Activated CD4-positive, alpha-beta memory T cell treated with anti-CD3 and anti-CD28 coated beads for 36 hours (primary cell): ENCODE measurements at regions of chr9 and their contacts with region 1.

Region 1: GRCh38 chr9:109119439-109120203 is at the start of gene TMEM245:
- DNase-seq: peak; percentile 97
- H3K4me3 Mint-ChIP-seq: peak within 1 kb of the TSS; percentile 88
- H3K27ac Mint-ChIP-seq: peak within 1 kb of the TSS; percentile 86
- H3K4me1 Mint-ChIP-seq: peaks cover 38% of the 10 kb centered on the region
- H3K27me3 Mint-ChIP-seq: no peaks in the 10 kb centered on the region
- total RNA-seq, gene TMEM245: 23.0 TPM

Region 2: DNA sequence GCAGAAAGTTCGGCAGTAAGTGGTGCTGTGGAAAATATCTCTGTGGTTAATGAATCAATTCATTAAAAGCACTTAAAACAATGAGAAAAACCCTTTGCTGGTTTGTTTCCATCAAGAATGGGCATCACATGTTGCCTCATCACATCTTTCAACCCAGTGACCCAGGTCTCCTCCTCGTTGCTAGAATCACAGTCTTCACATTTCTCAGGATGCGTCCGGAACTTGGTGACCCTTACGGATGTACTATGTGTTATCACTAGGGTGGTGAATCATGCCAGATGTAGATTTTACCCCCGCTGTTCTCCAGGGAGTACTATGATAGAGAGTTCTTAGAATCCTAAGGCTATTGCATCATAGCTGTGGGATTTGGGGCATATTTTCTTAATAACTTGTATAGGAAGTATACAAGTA is 1412.2 kb before region 1 on chr9:
- CTCF ChIA-PET with region 1: no interaction called
- POLR2A ChIA-PET with region 1: no interaction called
- intact Hi-C with region 1: no loop called
- DNase-seq: no peak
- H3K4me3 Mint-ChIP-seq: no peak overlapping the region
- H3K27ac Mint-ChIP-seq: no peak overlapping the region
- H3K4me1 Mint-ChIP-seq: no peaks in the 10 kb centered on the region
- H3K27me3 Mint-ChIP-seq: no peaks in the 10 kb centered on the region

Region 3: DNA sequence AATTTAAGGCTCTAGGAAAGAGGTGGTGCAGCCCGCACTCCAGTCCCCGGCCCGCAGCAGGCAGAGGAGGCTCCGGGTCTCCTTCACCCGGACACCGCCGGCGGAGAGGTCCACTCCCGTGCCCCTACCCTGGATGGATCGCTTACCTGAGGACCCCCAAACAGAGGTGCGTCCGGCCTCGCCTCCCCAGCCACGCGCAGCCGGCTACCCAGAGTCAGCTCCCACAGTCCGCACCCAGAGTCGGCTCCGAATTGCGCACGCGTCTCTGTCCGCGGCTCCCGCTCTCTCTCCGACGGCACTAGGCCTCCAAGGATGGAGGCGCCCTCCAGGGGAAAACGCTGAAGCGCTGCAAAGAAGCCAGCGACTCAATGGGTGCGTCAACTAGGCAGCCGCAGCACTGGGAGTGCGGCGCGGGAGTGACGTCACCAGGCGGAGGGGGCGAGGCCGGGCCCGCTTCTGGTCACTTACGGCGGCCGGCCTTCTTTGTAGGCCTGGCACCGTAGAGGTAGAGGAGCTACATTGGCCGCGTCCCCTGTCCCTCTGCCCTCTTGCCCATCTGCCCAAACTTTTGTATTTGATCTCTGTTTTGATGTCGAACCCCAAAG is 185.8 kb before region 1 on chr9 and contains the start of gene ELP1:
- CTCF ChIA-PET with region 1: no interaction called
- POLR2A ChIA-PET with region 1: interaction called, 3 read pairs
- intact Hi-C with region 1: loop called (anchors 1 kb)
- DNase-seq: peak; percentile 95
- H3K4me3 Mint-ChIP-seq: peak within 1 kb of the TSS; percentile 95
- H3K27ac Mint-ChIP-seq: peak within 1 kb of the TSS; percentile 92
- H3K4me1 Mint-ChIP-seq: peaks cover 25% of the 10 kb centered on the region
- H3K27me3 Mint-ChIP-seq: no peaks in the 10 kb centered on the region
- total RNA-seq, gene ELP1: 25.5 to 29.2 TPM

Region 4: DNA sequence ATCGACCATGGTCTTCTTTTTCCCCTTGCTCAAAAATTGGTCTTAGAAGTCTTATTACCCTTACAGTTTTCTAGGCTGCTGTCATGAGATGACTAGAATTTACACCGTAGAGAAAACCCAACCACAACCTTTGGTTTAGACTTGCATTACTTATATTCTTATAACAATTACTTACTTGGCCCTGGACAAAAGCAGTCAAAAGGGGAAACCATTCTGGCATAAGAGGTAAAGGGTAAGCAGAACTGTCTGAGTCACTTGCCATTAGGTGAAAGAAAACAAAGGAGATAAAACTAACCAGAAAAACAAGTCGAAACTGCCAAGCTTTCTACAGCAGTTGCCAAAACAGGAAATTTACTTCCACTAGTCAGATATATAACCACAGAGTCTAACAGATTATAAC is 17.8 kb before region 1 on chr9:
- CTCF ChIA-PET with region 1: interaction called, 3 read pairs
- POLR2A ChIA-PET with region 1: interaction called, 16 read pairs
- intact Hi-C with region 1: loop called (anchors 1 kb)
- DNase-seq: no peak
- H3K4me3 Mint-ChIP-seq: peak overlapping the region; percentile 38
- H3K27ac Mint-ChIP-seq: peak overlapping the region; percentile 76
- H3K4me1 Mint-ChIP-seq: peaks cover 66% of the 10 kb centered on the region
- H3K27me3 Mint-ChIP-seq: no peaks in the 10 kb centered on the region

Region 5: GRCh38 chr9:109182940-109183798 is 63.5 kb after region 1 on chr9:
- CTCF ChIA-PET with region 1: no interaction called
- POLR2A ChIA-PET with region 1: no interaction called
- intact Hi-C with region 1: loop called (anchors 1 kb)
- DNase-seq: peak; percentile 24
- H3K4me3 Mint-ChIP-seq: no peak overlapping the region
- H3K27ac Mint-ChIP-seq: no peak overlapping the region
- H3K4me1 Mint-ChIP-seq: peaks cover 11% of the 10 kb centered on the region
- H3K27me3 Mint-ChIP-seq: peaks cover 7% of the 10 kb centered on the region

Region 6: DNA sequence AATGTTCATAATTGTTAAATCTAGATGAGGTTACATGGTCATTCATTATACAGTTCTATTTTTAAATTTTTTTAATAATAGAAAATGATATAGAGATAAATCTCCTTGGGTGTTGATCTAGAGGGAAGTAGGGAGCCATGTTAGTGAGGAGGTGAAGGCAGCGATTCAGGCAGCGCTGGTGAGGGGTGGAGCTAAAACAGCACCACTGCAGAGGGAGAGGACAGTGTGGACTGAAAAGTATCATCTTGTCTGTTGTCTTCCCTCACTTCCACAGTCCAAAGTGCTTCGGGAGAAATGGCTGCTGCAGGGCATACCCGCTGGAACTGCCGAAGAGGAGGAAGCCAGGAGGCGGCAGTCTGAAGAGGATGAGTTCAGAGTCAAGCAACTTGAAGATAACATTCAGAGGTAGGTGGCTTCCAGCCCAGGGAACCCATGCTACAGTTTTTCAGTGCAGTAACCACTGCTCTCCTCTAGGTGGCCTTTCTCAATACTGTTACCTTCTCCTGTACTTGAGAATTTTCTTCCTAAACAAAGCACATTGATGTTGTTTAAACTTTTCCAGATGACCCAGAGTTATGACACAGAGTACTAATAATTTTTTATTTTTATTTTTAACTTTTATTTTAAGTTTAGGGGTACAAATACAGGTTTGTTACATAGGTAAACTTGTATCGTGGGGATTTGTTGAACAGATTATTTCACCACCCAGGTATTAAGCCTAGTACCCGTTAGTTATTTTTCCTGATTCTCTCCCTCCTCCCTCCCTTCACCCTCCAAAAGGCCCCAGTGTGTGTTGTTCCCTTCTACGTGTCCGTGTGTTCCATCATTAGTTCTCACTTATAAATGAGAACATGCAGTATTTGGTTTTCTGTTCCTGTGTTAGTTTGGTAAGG is 760.9 kb after region 1 on chr9:
- CTCF ChIA-PET with region 1: no interaction called
- POLR2A ChIA-PET with region 1: no interaction called
- intact Hi-C with region 1: loop called (anchors 10 kb)
- DNase-seq: peak; percentile 46
- H3K4me3 Mint-ChIP-seq: peak overlapping the region; percentile 33
- H3K27ac Mint-ChIP-seq: no peak overlapping the region
- H3K4me1 Mint-ChIP-seq: peaks cover 9% of the 10 kb centered on the region
- H3K27me3 Mint-ChIP-seq: peaks cover 10% of the 10 kb centered on the region